ENCODE measurements at regions of chr6 and their contacts with region 1.

Region 1: GRCh38 chr6:149468179-149468578 is 16.6 kb downstream of the ZC3H12D start:
- DNase-seq: no peak
- ATAC-seq: peak; percentile 43
- H3K4me3 ChIP-seq: peak overlapping the region; percentile 60
- H3K27ac ChIP-seq: peak overlapping the region; percentile 85
- H3K4me1 ChIP-seq: peaks cover 85% of the 10 kb centered on the region
- H3K27me3 ChIP-seq: no peaks in the 10 kb centered on the region
- CTCF ChIP-seq: no peak
- EP300 ChIP-seq: no peak
- POLR2A ChIP-seq: no peak
- RAD21 ChIP-seq: no peak

Region 2: GRCh38 chr6:149354009-149354408 is 114.2 kb before region 1 on chr6:
- CTCF ChIA-PET with region 1: no interaction called
- POLR2A ChIA-PET with region 1: no interaction called
- RAD21 ChIA-PET with region 1: no interaction called
- SMC1A ChIA-PET with region 1: no interaction called
- in situ Hi-C with region 1: no loop called
- intact Hi-C with region 1: no loop called
- DNase-seq: no peak
- ATAC-seq: no peak
- H3K4me3 ChIP-seq: no peak overlapping the region
- H3K27ac ChIP-seq: no peak overlapping the region
- H3K4me1 ChIP-seq: no peaks in the 10 kb centered on the region
- H3K27me3 ChIP-seq: no peaks in the 10 kb centered on the region
- CTCF ChIP-seq: no peak
- EP300 ChIP-seq: no peak
- POLR2A ChIP-seq: no peak
- RAD21 ChIP-seq: no peak

Region 3: GRCh38 chr6:149493761-149494320 is 25.7 kb after region 1 on chr6:
- CTCF ChIA-PET with region 1: interaction called, 11 read pairs
- POLR2A ChIA-PET with region 1: interaction called, 5 read pairs
- RAD21 ChIA-PET with region 1: interaction called, 18 read pairs
- SMC1A ChIA-PET with region 1: interaction called, 25 read pairs
- in situ Hi-C with region 1: no loop called
- intact Hi-C with region 1: no loop called
- DNase-seq: no peak
- ATAC-seq: no peak
- H3K4me3 ChIP-seq: no peak overlapping the region
- H3K27ac ChIP-seq: no peak overlapping the region
- H3K4me1 ChIP-seq: peaks cover 47% of the 10 kb centered on the region
- H3K27me3 ChIP-seq: no peaks in the 10 kb centered on the region
- CTCF ChIP-seq: no peak
- EP300 ChIP-seq: no peak
- POLR2A ChIP-seq: no peak
- RAD21 ChIP-seq: no peak